ENCODE measurements at regions of chr13 and their contacts with region 1.

Region 1: DNA sequence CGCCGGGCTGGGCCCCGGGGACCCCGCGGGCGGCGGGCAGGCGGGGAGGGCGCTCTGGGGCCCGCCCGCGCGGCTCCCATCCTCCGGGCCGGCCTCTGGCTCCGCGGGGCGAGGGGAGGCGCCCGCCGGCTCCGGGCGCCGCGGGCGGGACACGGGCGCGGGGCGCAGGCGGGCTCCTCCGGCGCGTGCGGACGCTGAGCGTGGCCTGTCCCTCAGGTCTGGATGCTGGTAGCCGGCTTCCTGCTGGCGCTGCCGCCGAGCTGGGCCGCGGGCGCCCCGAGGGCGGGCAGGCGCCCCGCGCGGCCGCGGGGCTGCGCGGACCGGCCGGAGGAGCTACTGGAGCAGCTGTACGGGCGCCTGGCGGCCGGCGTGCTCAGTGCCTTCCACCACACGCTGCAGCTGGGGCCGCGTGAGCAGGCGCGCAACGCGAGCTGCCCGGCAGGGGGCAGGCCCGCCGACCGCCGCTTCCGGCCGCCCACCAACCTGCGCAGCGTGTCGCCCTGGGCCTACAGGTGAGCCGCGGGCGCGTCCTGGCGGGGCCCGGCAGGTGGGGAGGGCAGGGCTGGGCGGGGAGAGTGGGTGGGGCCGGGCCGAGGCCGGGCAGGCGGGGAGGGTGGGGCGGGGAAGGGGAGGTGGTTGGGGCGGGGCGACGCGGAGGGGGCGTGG is 414 bp downstream of the IL17D start:
- DNase-seq: peak; percentile 70 to 84 (median 80)
- ATAC-seq: peak; percentile 93
- H3K4me3 ChIP-seq: no peak overlapping the region
- H3K4me3 Mint-ChIP-seq: peak overlapping the region in 4 of 10 donors; percentile 59 to 97 (median 72)
- H3K27ac ChIP-seq: no peak overlapping the region
- H3K27ac Mint-ChIP-seq: peak overlapping the region in 1 of 9 donors; percentile 56
- H3K4me1 ChIP-seq: peaks cover 3 to 8% of the 10 kb centered on the region in 2 donors
- H3K4me1 Mint-ChIP-seq: peaks cover 0 to 13% (median 8%) of the 10 kb centered on the region in 7 donors
- H3K27me3 ChIP-seq: peaks cover 0 to 5% of the 10 kb centered on the region in 2 donors
- H3K27me3 Mint-ChIP-seq: peaks cover 13 to 48% (median 17%) of the 10 kb centered on the region in 5 donors

Region 2: DNA sequence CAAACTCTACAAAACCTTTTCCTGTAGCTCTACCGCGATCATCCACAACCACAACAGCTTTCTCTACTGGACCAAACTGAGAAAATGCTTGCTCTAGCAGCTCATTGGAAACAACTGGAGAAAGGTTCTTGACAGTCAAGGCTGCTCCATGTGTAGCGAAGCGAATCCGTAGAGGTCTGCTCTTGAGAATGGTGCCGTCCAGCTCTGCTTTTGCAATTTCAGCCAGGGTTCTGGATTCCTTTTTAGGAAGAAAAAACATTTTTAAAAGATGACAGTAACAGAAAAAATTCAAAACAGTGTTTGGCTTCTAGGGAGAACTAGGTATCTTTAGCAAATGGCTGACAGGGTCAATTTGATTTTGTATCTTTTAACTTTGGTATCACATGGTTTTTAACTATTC is 931.6 kb before region 1 on chr13:
- CTCF ChIA-PET with region 1: no interaction called
- POLR2A ChIA-PET with region 1: no interaction called
- intact Hi-C with region 1: loop called in 1 of 2 experiments (anchors 10 kb)
- DNase-seq: no peak
- ATAC-seq: no peak
- H3K4me3 ChIP-seq: no peak overlapping the region
- H3K4me3 Mint-ChIP-seq: peak overlapping the region in 4 of 10 donors; percentile 2 to 13 (median 6)
- H3K27ac ChIP-seq: no peak overlapping the region
- H3K27ac Mint-ChIP-seq: peak overlapping the region in 4 of 9 donors; percentile 0 to 29 (median 21)
- H3K4me1 ChIP-seq: peaks cover 4 to 21% of the 10 kb centered on the region in 2 donors
- H3K4me1 Mint-ChIP-seq: peaks cover 26 to 70% (median 47%) of the 10 kb centered on the region in 7 donors
- H3K27me3 ChIP-seq: no peaks in the 10 kb centered on the region
- H3K27me3 Mint-ChIP-seq: no peaks in the 10 kb centered on the region

Region 3: GRCh38 chr13:20505405-20506366 is 198.2 kb before region 1 on chr13:
- CTCF ChIA-PET with region 1: no interaction called
- POLR2A ChIA-PET with region 1: no interaction called
- intact Hi-C with region 1: no loop called
- DNase-seq: no peak
- ATAC-seq: no peak
- H3K4me3 ChIP-seq: no peak overlapping the region
- H3K4me3 Mint-ChIP-seq: no peak overlapping the region
- H3K27ac ChIP-seq: no peak overlapping the region
- H3K27ac Mint-ChIP-seq: no peak overlapping the region
- H3K4me1 ChIP-seq: no peaks in the 10 kb centered on the region
- H3K4me1 Mint-ChIP-seq: peaks cover 0 to 5% (median 0%) of the 10 kb centered on the region in 7 donors
- H3K27me3 ChIP-seq: no peaks in the 10 kb centered on the region
- H3K27me3 Mint-ChIP-seq: no peaks in the 10 kb centered on the region

Region 4: DNA sequence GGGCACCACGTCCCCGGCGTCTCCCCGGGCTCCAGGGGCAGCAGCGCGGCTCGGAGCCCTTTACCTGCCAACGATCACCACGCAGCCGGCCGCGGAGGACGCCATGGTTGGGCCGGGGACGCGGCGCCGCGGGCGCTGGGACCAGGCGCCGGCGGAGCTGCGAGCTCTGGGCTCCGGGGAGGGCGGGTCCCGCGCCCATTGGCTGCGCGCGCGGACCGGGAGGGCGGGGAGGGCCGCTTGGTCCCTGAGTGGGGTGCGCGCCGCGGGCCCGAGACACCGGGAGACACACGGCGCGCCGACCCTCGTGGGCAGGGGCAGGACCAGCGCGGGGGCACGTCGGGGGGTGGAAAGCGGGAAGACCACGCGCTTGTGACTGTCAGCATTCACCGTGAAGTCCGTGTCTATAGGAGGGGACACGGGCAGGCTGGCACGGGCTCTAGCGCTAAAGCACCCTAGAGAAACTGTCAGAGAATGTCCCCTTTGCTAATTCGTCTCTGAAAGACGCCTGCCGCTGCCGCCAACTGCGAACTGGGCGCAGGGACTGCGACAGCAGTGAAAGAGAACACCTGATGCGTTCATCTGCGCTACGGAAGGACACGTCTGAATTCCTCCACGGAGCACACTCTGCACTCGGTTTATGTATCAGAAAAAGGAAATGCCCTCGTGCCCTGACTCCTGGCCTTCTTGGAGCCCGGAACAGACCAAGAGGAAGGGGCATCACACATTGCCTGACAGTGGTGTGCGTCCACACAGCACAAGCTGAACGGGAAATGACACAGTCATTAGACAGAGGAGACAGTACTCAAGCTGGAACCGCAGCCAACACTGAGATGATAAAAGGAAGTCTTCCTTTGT is 178.0 kb before region 1 on chr13 and contains the start of gene CRYL1:
- CTCF ChIA-PET with region 1: no interaction called
- POLR2A ChIA-PET with region 1: no interaction called
- intact Hi-C with region 1: loop called (anchors 1 to 10 kb)
- DNase-seq: peak; percentile 56 to 78 (median 68)
- ATAC-seq: peak; percentile 92
- H3K4me3 ChIP-seq: peak within 1 kb of the TSS; percentile 68
- H3K4me3 Mint-ChIP-seq: peak within 1 kb of the TSS; percentile 76 to 94 (median 87)
- H3K27ac ChIP-seq: peak within 1 kb of the TSS; percentile 65
- H3K27ac Mint-ChIP-seq: peak within 1 kb of the TSS; percentile 66 to 96 (median 88)
- H3K4me1 ChIP-seq: peaks cover 0 to 7% of the 10 kb centered on the region in 2 donors
- H3K4me1 Mint-ChIP-seq: peaks cover 11 to 40% (median 25%) of the 10 kb centered on the region in 7 donors
- H3K27me3 ChIP-seq: no peaks in the 10 kb centered on the region
- H3K27me3 Mint-ChIP-seq: peaks cover 0 to 9% (median 0%) of the 10 kb centered on the region in 5 donors
- total RNA-seq, gene CRYL1: 12.3 to 21.2 (median 16.3) TPM

Region 5: GRCh38 chr13:20637811-20638210 is 66.1 kb before region 1 on chr13:
- CTCF ChIA-PET with region 1: no interaction called
- POLR2A ChIA-PET with region 1: no interaction called
- intact Hi-C with region 1: no loop called
- DNase-seq: no peak
- ATAC-seq: no peak
- H3K4me3 ChIP-seq: no peak overlapping the region
- H3K4me3 Mint-ChIP-seq: no peak overlapping the region
- H3K27ac ChIP-seq: no peak overlapping the region
- H3K27ac Mint-ChIP-seq: no peak overlapping the region
- H3K4me1 ChIP-seq: no peaks in the 10 kb centered on the region
- H3K4me1 Mint-ChIP-seq: peaks cover 0 to 5% (median 0%) of the 10 kb centered on the region in 7 donors
- H3K27me3 ChIP-seq: no peaks in the 10 kb centered on the region
- H3K27me3 Mint-ChIP-seq: no peaks in the 10 kb centered on the region

Region 6: DNA sequence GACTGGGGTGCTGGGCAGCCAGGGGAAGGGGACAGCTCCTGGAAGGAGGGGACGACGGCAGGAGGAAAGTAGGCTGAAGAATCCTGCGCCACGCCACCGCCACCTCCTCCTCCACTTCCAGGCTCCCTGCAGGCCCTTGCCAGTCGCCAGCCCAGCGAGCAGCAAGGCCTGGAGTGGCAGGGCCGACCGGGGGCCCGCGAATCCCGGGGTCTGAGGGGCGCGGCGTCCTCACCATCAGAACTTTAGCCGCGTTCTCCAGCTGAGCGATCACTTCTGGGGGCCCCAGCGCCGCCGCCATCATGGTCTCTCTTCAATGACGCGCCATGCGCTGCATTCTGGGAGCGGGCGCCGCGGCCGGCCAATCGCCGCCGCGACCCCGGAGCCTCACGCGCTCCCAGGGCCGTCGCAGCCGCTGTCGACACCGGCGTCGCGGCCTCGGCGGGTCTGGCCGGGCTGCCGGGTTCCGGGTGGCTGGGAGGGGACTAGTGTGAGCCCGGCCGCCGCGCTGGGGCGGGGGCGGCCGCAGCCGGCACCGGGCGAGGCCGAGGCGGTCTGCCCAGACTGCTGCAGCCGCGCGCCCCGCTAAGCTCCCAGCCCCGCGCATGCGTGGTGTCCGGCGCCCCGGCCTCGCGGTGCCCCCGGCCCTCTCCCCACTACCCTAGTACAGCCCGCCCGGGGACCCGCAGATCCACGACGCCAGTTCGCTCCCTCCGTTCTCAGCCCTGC is 198.7 kb after region 1 on chr13 and contains the start of gene XPO4:
- CTCF ChIA-PET with region 1: no interaction called
- POLR2A ChIA-PET with region 1: no interaction called
- intact Hi-C with region 1: loop called in 1 of 2 experiments (anchors 2 kb)
- DNase-seq: peak; percentile 68 to 85 (median 77)
- ATAC-seq: peak; percentile 97
- H3K4me3 ChIP-seq: peak within 1 kb of the TSS; percentile 98
- H3K4me3 Mint-ChIP-seq: peak within 1 kb of the TSS; percentile 93 to 98 (median 96)
- H3K27ac ChIP-seq: peak within 1 kb of the TSS; percentile 83
- H3K27ac Mint-ChIP-seq: peak within 1 kb of the TSS; percentile 89 to 98 (median 95)
- H3K4me1 ChIP-seq: peaks cover 10 to 21% of the 10 kb centered on the region in 2 donors
- H3K4me1 Mint-ChIP-seq: peaks cover 15 to 41% (median 32%) of the 10 kb centered on the region in 7 donors
- H3K27me3 ChIP-seq: no peaks in the 10 kb centered on the region
- H3K27me3 Mint-ChIP-seq: peaks cover 0 to 3% (median 0%) of the 10 kb centered on the region in 5 donors
- total RNA-seq, gene XPO4: 20.9 to 26.5 (median 23.5) TPM

Region 7: DNA sequence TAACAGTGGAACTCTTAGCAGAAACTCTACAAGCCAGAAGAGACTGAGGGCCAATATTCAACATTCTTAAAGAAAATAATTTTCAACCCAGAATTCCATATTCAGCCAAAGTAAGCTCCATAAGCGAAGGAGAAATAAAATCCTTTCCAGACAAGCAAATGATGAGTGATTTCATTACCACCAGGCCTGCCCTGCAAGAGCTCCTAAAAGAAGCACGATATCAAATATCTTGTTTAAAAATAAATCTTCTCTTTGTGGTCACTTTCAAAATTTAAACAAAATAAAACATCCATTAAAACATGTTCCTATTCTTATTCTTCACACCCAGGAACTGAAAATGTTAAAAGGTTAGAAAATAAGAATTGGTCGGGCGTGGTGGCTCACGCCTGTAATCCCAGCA is 886.3 kb after region 1 on chr13:
- CTCF ChIA-PET with region 1: no interaction called
- POLR2A ChIA-PET with region 1: no interaction called
- intact Hi-C with region 1: no loop called
- DNase-seq: no peak
- ATAC-seq: no peak
- H3K4me3 ChIP-seq: no peak overlapping the region
- H3K4me3 Mint-ChIP-seq: peak overlapping the region in 3 of 10 donors; percentile 7 to 51 (median 25)
- H3K27ac ChIP-seq: no peak overlapping the region
- H3K27ac Mint-ChIP-seq: peak overlapping the region in 1 of 9 donors; percentile 9
- H3K4me1 ChIP-seq: peaks cover 0 to 3% of the 10 kb centered on the region in 2 donors
- H3K4me1 Mint-ChIP-seq: peaks cover 21 to 95% (median 91%) of the 10 kb centered on the region in 7 donors
- H3K27me3 ChIP-seq: no peaks in the 10 kb centered on the region
- H3K27me3 Mint-ChIP-seq: no peaks in the 10 kb centered on the region

Measured in naive thymus-derived CD4-positive, alpha-beta T cell (primary cell).